Calu3 (cell line): ENCODE measurements at regions of chrX and their contacts with region 1.

Region 1: GRCh38 chrX:22081475-22082092 is 49.5 kb downstream of the PHEX start:
- DNase-seq: peak; percentile 65
- H3K4me3 Mint-ChIP-seq: no peak overlapping the region
- H3K27ac Mint-ChIP-seq: no peak overlapping the region
- H3K4me1 Mint-ChIP-seq: peaks cover 8% of the 10 kb centered on the region
- H3K27me3 Mint-ChIP-seq: no peaks in the 10 kb centered on the region
- CTCF ChIP-seq: peak; percentile 51

Region 2: DNA sequence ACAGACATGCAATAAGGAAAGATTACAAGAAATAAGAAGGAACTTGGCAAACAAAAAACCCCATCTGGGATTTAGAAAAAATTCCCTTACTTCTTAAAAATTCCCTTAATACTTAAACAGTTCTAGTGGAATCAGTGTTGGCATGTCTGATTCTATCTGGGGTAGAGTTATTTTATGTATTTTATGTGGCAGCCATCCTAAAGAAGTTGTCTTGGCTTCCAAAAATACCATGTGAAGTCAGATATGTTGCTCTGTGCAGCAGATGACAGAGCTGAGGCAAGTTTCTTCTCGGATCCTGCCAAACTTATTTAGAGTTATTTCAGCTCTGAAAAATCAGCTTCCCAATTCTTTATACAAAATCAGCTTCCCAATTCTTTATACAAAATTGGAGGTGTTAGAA is 211.1 kb before region 1 on chrX:
- CTCF ChIA-PET with region 1: no interaction called
- intact Hi-C with region 1: no loop called
- DNase-seq: no peak
- H3K4me3 Mint-ChIP-seq: no peak overlapping the region
- H3K27ac Mint-ChIP-seq: no peak overlapping the region
- H3K4me1 Mint-ChIP-seq: no peaks in the 10 kb centered on the region
- H3K27me3 Mint-ChIP-seq: no peaks in the 10 kb centered on the region
- CTCF ChIP-seq: no peak

Region 3: GRCh38 chrX:22192417-22193060 is 111.0 kb after region 1 on chrX:
- CTCF ChIA-PET with region 1: no interaction called
- intact Hi-C with region 1: loop called (anchors 1 kb)
- DNase-seq: peak; percentile 68
- H3K4me3 Mint-ChIP-seq: peak overlapping the region; percentile 55
- H3K27ac Mint-ChIP-seq: peak overlapping the region; percentile 6
- H3K4me1 Mint-ChIP-seq: peaks cover 9% of the 10 kb centered on the region
- H3K27me3 Mint-ChIP-seq: no peaks in the 10 kb centered on the region
- CTCF ChIP-seq: peak; percentile 59

Region 4: DNA sequence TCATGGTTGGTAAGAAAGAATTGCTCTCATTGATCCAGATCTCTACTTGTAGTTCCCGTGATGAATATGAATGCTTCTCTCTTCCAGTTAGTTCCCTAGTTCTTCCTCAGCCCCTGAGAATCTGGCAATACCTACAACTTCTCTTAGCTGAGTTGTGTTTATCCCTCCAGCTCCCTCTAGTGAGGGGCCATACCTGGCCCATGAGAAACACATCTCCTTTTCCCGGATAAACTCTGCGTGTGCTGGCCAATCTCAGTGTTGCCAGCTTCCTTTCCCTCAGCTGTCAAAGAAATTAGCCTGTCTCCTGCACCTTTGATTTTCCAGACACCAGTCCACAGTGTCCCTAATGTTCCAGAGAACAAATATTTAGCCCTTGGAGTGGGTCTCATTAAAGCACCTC is 196.8 kb after region 1 on chrX:
- CTCF ChIA-PET with region 1: interaction called, 3 read pairs
- intact Hi-C with region 1: loop called (anchors 10 kb)
- DNase-seq: peak; percentile 22
- H3K4me3 Mint-ChIP-seq: no peak overlapping the region
- H3K27ac Mint-ChIP-seq: no peak overlapping the region
- H3K4me1 Mint-ChIP-seq: no peaks in the 10 kb centered on the region
- H3K27me3 Mint-ChIP-seq: peaks cover 15% of the 10 kb centered on the region
- CTCF ChIP-seq: no peak